Activated CD8-positive, alpha-beta T cell treated with anti-CD3 and anti-CD28 coated beads, Interleukin-2, amount 10 ng/mL, durations not matched to agents 7 days and 5 days (primary cell): ENCODE measurements at regions of chr5 and their contacts with region 1.

Region 1: DNA sequence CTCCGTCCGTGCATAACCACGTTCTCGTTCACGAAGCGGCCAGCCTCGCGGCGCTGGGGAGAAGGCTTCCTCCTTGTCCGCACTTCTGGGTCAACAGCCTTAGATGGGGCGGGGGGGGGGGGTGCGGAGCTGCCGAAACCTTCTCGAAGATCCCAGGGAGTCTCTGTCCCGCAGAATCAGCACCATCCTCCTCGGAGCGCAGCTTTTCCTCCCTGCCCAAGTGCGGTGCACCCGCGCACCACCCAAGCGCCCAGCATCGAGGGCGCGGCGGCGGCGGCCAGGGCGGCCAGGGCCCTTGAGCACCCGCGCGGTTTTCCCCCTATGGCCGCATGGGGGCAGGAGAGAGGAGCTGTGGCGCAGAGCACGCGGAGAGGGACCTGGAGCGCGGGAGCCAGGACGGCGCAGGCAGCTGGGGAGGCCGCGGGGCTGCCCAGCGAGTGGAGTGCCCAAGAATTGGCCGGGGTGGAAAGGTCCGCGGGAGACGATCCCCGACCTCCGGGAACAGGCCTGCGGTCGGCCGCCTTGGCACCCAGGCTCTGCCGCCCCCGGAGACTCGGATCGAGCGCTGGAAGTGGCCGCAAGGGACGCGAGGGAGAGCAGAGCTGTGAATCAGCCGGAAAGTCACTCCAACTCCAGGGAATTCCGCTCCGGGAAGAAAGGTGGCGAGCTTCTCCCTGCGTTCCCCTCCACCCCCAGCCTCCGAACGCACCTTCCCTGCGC is 43.1 kb downstream of the TMEM174 start:
- DNase-seq: peak; percentile 68
- ATAC-seq: peak; percentile 96
- H3K4me3 Mint-ChIP-seq: no peak overlapping the region
- H3K27ac Mint-ChIP-seq: no peak overlapping the region
- H3K4me1 Mint-ChIP-seq: peaks cover 8% of the 10 kb centered on the region
- H3K27me3 Mint-ChIP-seq: peaks cover 68% of the 10 kb centered on the region

Region 2: GRCh38 chr5:73201547-73202513 is 14.2 kb before region 1 on chr5:
- CTCF ChIA-PET with region 1: interaction called, 17 read pairs
- POLR2A ChIA-PET with region 1: no interaction called
- DNase-seq: peak; percentile 74
- ATAC-seq: peak; percentile 93
- H3K4me3 Mint-ChIP-seq: no peak overlapping the region
- H3K27ac Mint-ChIP-seq: no peak overlapping the region
- H3K4me1 Mint-ChIP-seq: peaks cover 3% of the 10 kb centered on the region
- H3K27me3 Mint-ChIP-seq: peaks cover 46% of the 10 kb centered on the region

Region 3: GRCh38 chr5:73229209-73229661 is 13.2 kb after region 1 on chr5:
- CTCF ChIA-PET with region 1: interaction called, 20 read pairs
- POLR2A ChIA-PET with region 1: no interaction called
- DNase-seq: no peak
- ATAC-seq: no peak
- H3K4me3 Mint-ChIP-seq: no peak overlapping the region
- H3K27ac Mint-ChIP-seq: no peak overlapping the region
- H3K4me1 Mint-ChIP-seq: peaks cover 21% of the 10 kb centered on the region
- H3K27me3 Mint-ChIP-seq: peaks cover 68% of the 10 kb centered on the region

Region 4: GRCh38 chr5:73295447-73295846 is 79.4 kb after region 1 on chr5:
- CTCF ChIA-PET with region 1: no interaction called
- POLR2A ChIA-PET with region 1: no interaction called
- DNase-seq: no peak
- ATAC-seq: no peak
- H3K4me3 Mint-ChIP-seq: no peak overlapping the region
- H3K27ac Mint-ChIP-seq: no peak overlapping the region
- H3K4me1 Mint-ChIP-seq: no peaks in the 10 kb centered on the region
- H3K27me3 Mint-ChIP-seq: peaks cover 67% of the 10 kb centered on the region

Region 5: DNA sequence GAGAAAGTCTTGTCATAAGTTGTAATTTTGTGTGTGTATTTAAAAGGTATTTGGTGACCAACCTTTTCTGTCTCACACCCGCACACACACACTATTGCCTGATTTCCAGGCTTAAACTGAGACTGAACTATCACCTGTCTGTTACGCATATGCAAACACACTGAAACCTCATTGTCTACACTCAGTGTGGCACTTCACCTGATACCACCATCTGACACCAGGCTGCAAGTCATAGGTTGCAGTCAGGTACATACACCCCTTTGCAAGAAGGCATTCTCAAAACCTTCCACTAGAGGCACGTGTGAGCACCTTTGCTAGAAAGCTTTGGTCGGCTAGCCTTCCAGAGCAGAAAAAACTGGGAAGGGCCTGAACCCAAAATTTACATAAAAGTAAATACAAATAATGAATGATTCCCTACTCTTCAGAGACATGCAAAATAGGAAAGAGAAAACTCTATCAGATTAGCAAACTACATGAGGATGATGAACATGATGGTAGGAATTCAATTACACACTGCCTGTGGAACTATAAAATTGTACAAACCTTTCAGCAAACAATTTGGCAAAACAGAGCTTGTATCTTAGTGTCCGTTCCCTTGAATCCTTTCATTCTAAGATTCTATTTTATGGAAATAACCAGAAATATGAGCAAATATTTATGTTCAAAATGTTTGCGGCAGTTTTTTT is 238.4 kb after region 1 on chr5:
- CTCF ChIA-PET with region 1: interaction called, 27 read pairs
- POLR2A ChIA-PET with region 1: no interaction called
- DNase-seq: peak; percentile 46
- ATAC-seq: peak; percentile 70
- H3K4me3 Mint-ChIP-seq: no peak overlapping the region
- H3K27ac Mint-ChIP-seq: no peak overlapping the region
- H3K4me1 Mint-ChIP-seq: peaks cover 8% of the 10 kb centered on the region
- H3K27me3 Mint-ChIP-seq: peaks cover 49% of the 10 kb centered on the region

Region 6: DNA sequence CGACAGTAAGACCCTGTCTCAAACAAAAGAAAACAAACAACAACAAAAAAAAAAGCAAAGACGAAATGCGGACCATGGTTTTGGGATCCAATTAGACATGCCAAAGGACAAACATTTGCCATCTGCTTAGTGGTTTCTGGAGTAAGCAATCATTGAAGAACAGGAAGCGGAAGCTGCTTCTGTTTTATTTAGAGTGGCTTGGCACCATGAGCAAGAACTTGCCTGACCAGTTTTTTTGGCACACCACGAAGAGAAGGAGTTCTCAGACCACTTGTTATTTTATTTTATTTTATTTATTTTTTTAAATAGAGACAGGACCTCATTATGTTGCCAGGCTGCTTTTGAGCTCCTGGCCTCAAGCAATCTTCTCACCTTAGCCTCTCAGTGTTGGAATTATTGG is 299.2 kb after region 1 on chr5:
- CTCF ChIA-PET with region 1: no interaction called
- POLR2A ChIA-PET with region 1: no interaction called
- DNase-seq: no peak
- ATAC-seq: no peak
- H3K4me3 Mint-ChIP-seq: no peak overlapping the region
- H3K27ac Mint-ChIP-seq: no peak overlapping the region
- H3K4me1 Mint-ChIP-seq: peaks cover 6% of the 10 kb centered on the region
- H3K27me3 Mint-ChIP-seq: no peaks in the 10 kb centered on the region